ENCODE measurements at regions of chr12 and their contacts with region 1.

Region 1: DNA sequence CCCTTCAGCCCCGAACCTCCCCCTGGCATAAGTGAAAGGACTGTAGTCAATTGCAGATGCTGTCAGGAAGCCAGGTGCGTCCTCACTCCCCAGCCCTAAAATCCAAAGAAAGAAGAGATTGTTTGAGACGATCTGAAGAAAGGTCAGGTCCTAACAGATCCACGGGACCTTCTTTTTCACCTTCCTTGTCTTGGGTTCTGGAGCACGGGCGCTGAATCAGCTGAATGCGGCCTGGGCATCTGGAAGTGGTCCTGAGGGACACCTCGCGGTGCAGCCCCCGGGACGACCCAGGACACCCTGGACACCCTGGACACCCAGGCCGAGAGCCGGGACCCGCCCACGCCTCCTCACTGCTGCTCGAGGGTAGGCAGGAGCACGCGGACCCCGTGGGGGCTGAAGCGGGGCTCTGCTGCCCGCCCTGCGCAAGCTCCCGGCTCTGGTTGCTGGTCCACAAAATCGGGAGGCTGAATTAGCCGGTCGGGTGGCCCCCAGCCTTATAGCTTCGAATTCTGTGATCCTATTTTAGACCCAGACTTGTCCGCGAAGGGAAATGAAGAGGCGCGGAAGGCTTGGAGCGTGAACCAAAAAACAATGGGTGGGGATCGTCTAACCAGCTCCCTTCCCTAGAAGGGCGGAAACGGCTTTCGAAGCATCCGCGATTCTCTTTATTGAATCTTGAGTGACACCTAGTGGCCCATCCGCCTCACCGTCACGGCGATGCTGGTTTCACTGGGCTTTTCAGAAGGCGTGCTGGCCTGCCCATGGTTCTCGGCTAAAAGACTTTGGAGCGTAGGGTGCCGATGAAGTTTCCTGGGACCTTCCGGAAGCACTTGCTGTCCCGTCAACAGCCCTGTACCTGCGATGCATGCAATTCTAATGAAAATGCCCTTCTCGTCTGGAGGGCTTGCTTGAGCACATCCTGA is 46.4 kb upstream of the PLXNC1 start:
- DNase-seq: peak; percentile 71 to 91 (median 84)
- ATAC-seq: peak; percentile 86
- H3K4me3 ChIP-seq: peak overlapping the region; percentile 58 to 70
- H3K4me3 Mint-ChIP-seq: peak overlapping the region; percentile 87
- H3K27ac ChIP-seq: no peak overlapping the region
- H3K27ac Mint-ChIP-seq: peak overlapping the region; percentile 52
- H3K4me1 ChIP-seq: peaks cover 2% of the 10 kb centered on the region
- H3K4me1 Mint-ChIP-seq: peaks cover 11% of the 10 kb centered on the region
- H3K27me3 ChIP-seq: no peaks in the 10 kb centered on the region
- H3K27me3 Mint-ChIP-seq: peaks cover 33% of the 10 kb centered on the region
- CTCF ChIP-seq: peak; percentile 69

Region 2: GRCh38 chr12:93378373-93379325 is 723.4 kb before region 1 on chr12:
- CTCF ChIA-PET with region 1: interaction called, 5 read pairs
- POLR2A ChIA-PET with region 1: no interaction called
- intact Hi-C with region 1: loop called in 1 of 2 experiments (anchors 5 kb)
- DNase-seq: peak; percentile 18 to 85 (median 57)
- ATAC-seq: peak; percentile 54
- H3K4me3 ChIP-seq: peak overlapping the region; percentile 72 to 87
- H3K4me3 Mint-ChIP-seq: peak overlapping the region; percentile 99
- H3K27ac ChIP-seq: peak overlapping the region; percentile 77 to 81
- H3K27ac Mint-ChIP-seq: peak overlapping the region; percentile 99
- H3K4me1 ChIP-seq: peaks cover 23% of the 10 kb centered on the region
- H3K4me1 Mint-ChIP-seq: peaks cover 44% of the 10 kb centered on the region
- H3K27me3 ChIP-seq: no peaks in the 10 kb centered on the region
- H3K27me3 Mint-ChIP-seq: no peaks in the 10 kb centered on the region
- CTCF ChIP-seq: no peak

Region 3: GRCh38 chr12:93502802-93503623 is 599.0 kb before region 1 on chr12:
- CTCF ChIA-PET with region 1: interaction called, 379 read pairs
- POLR2A ChIA-PET with region 1: interaction called, 22 read pairs
- intact Hi-C with region 1: loop called (anchors 1 kb)
- DNase-seq: peak; percentile 34 to 72 (median 64)
- ATAC-seq: peak; percentile 36
- H3K4me3 ChIP-seq: no peak overlapping the region
- H3K4me3 Mint-ChIP-seq: no peak overlapping the region
- H3K27ac ChIP-seq: no peak overlapping the region
- H3K27ac Mint-ChIP-seq: no peak overlapping the region
- H3K4me1 ChIP-seq: no peaks in the 10 kb centered on the region
- H3K4me1 Mint-ChIP-seq: no peaks in the 10 kb centered on the region
- H3K27me3 ChIP-seq: no peaks in the 10 kb centered on the region
- H3K27me3 Mint-ChIP-seq: no peaks in the 10 kb centered on the region
- CTCF ChIP-seq: peak; percentile 95

Region 4: GRCh38 chr12:93569656-93570551 is 532.1 kb before region 1 on chr12:
- CTCF ChIA-PET with region 1: interaction called, 229 read pairs
- POLR2A ChIA-PET with region 1: interaction called, 6 read pairs
- intact Hi-C with region 1: loop called (anchors 1 kb)
- DNase-seq: peak; percentile 39 to 86 (median 73)
- ATAC-seq: peak; percentile 47
- H3K4me3 ChIP-seq: peak overlapping the region; percentile 94 to 96
- H3K4me3 Mint-ChIP-seq: peak overlapping the region; percentile 93
- H3K27ac ChIP-seq: peak overlapping the region; percentile 72 to 79
- H3K27ac Mint-ChIP-seq: peak overlapping the region; percentile 90
- H3K4me1 ChIP-seq: peaks cover 17% of the 10 kb centered on the region
- H3K4me1 Mint-ChIP-seq: peaks cover 28% of the 10 kb centered on the region
- H3K27me3 ChIP-seq: no peaks in the 10 kb centered on the region
- H3K27me3 Mint-ChIP-seq: peaks cover 2% of the 10 kb centered on the region
- CTCF ChIP-seq: peak; percentile 64

Region 5: GRCh38 chr12:93766796-93767523 is 335.0 kb before region 1 on chr12:
- CTCF ChIA-PET with region 1: interaction called, 93 read pairs
- POLR2A ChIA-PET with region 1: interaction called, 3 read pairs
- intact Hi-C with region 1: loop called (anchors 1 kb)
- DNase-seq: peak in 5 of 9 experiments; percentile 9 to 63 (median 43)
- ATAC-seq: peak; percentile 75
- H3K4me3 ChIP-seq: no peak overlapping the region
- H3K4me3 Mint-ChIP-seq: no peak overlapping the region
- H3K27ac ChIP-seq: peak overlapping the region in 1 of 2 experiments; percentile 17
- H3K27ac Mint-ChIP-seq: no peak overlapping the region
- H3K4me1 ChIP-seq: peaks cover 7% of the 10 kb centered on the region
- H3K4me1 Mint-ChIP-seq: peaks cover 23% of the 10 kb centered on the region
- H3K27me3 ChIP-seq: no peaks in the 10 kb centered on the region
- H3K27me3 Mint-ChIP-seq: no peaks in the 10 kb centered on the region
- CTCF ChIP-seq: peak; percentile 58

Region 6: DNA sequence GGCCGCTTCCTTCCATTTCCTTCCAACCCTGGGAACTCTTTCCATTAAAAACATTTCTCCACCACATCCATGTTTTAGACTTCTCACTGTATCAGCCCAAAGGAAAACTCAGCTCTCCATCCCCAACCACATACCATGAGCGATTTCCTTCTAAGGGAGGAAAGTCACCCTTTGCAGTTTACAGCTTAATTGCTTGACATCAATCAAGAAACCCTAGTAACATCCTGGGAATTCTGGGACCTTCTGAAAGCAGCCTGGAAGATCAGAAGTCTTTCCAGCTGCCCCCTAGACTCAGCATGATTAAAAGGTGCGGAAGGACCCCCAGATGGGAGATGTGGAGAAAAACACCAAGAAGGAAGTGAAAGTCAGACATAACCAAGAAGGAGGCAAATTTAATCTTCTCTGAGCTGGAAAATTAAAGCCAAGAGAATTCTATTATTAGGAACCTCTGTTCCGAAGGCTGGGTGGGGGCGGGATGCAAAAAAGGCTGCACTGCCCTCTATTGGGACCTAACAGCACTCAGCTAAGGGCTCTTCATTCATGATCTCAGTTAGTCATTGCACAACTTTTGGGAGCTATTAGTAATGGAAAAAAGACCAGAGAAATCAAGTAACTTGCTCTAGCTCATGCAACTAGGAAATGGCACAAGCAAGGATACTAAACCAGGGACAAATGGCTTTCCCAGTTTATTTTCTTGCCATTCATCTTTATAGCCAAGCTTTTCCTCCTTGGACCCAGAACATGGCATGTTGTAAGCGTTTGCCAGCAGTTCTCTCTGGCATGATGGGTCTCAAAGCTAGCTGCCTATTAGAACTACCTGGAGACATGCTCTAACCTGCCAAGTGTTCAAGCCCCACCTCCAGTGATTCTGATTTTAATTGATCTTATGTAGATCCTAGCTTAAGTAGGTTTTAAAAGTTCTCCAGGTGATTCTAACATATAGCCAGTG is 26.7 kb before region 1 on chr12:
- CTCF ChIA-PET with region 1: interaction called, 57 read pairs
- POLR2A ChIA-PET with region 1: interaction called, 3 read pairs
- intact Hi-C with region 1: no loop called
- DNase-seq: peak in 2 of 9 experiments; percentile 13 to 38
- ATAC-seq: no peak
- H3K4me3 ChIP-seq: no peak overlapping the region
- H3K4me3 Mint-ChIP-seq: no peak overlapping the region
- H3K27ac ChIP-seq: no peak overlapping the region
- H3K27ac Mint-ChIP-seq: no peak overlapping the region
- H3K4me1 ChIP-seq: peaks cover 6% of the 10 kb centered on the region
- H3K4me1 Mint-ChIP-seq: peaks cover 15% of the 10 kb centered on the region
- H3K27me3 ChIP-seq: no peaks in the 10 kb centered on the region
- H3K27me3 Mint-ChIP-seq: peaks cover 10% of the 10 kb centered on the region
- CTCF ChIP-seq: peak; percentile 17

Region 7: DNA sequence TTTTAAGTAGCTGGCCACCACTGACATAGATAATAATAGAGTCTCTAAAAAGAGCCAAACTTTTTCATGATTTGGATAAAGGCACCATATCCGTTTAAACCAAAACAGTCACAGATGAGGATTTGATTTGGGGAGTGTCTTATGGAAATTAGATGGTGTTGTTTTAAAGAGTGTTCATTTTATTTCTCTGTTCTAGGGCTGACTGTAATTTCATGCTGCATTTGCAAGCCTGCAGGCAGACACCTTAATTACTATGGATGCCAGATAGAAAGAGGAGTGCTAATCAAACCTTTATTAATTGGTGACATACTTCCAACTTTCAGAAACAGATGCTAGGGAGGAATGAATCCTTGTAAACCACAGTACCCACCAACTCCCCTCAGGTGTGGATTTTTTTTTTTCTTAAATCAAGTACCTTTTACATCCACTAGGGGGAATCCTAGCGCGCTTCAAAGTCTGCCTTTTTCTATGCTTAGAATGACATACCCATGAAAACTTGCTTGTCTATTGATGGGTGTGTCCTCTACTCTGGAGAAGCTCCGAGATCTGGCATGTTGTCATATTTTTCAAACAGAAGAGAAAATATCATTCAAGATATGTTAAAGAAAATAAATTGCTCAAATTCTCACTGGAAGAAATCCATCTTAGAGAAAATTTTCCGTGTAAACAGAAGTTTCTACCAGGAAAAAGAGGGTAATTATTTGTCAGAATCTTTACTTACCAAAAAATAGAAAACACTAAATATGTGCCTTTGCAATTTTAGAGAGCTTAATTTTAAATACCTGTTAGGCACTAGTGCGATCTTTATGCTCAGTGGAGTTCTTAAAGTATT is 32.2 kb after region 1 on chr12:
- CTCF ChIA-PET with region 1: interaction called, 12 read pairs
- POLR2A ChIA-PET with region 1: no interaction called
- intact Hi-C with region 1: no loop called
- DNase-seq: peak in 5 of 9 experiments; percentile 9 to 75 (median 39)
- ATAC-seq: peak; percentile 100
- H3K4me3 ChIP-seq: no peak overlapping the region
- H3K4me3 Mint-ChIP-seq: no peak overlapping the region
- H3K27ac ChIP-seq: no peak overlapping the region
- H3K27ac Mint-ChIP-seq: no peak overlapping the region
- H3K4me1 ChIP-seq: no peaks in the 10 kb centered on the region
- H3K4me1 Mint-ChIP-seq: peaks cover 3% of the 10 kb centered on the region
- H3K27me3 ChIP-seq: no peaks in the 10 kb centered on the region
- H3K27me3 Mint-ChIP-seq: no peaks in the 10 kb centered on the region
- CTCF ChIP-seq: peak; percentile 77

Measured in CD8-positive, alpha-beta T cell (primary cell).